Dendritic cell treated with granulocyte-macrophage colony-stimulating factor and Interleukin-4, amounts not matched to agents 40 ng/mL and 50 ng/mL, for 4 days (primary cell): ENCODE measurements at regions of chr2 and their contacts with region 1.

Region 1: DNA sequence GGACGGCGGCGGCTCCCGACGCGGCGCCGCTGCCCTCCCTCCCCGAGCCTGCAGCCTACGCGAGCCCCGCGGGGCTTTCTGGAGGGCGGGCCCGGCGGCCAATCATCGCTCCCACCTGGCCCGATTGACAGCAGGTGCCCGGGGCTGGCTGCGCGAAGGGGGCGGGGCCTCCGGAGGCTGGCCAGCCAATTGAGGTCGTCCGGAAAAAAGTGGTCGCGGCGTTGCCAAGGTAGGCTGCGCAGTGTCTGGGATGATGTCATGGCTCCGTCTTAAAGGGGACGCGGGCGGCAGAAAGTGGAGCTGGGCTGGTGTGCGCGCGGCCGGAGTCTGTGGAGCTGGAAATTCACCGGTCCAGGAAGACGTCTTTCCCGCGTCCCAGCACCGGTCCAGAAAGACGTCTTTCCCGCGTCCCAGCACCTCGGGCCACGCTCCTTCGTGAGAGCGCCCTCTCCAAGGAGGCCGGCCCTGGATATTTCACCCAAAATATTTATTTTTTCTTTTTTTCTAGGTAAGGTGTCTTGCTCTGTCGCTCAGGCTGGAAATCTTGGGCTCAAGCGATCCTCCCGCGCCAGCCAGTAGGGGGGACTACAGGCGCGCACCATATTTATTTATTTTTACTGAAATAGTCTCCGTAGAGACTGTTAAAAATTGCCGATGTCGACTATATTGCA is at the start of gene ACTR1B:
- H3K4me3 Mint-ChIP-seq: peak within 1 kb of the TSS; percentile 88
- H3K27ac Mint-ChIP-seq: peak within 1 kb of the TSS; percentile 95
- H3K4me1 Mint-ChIP-seq: peaks cover 39% of the 10 kb centered on the region
- H3K27me3 Mint-ChIP-seq: no peaks in the 10 kb centered on the region

Region 2: GRCh38 chr2:97645695-97646629 is 18.1 kb before region 1 on chr2 and contains the start of gene COX5B:
- intact Hi-C with region 1: loop called (anchors 1 kb)
- H3K4me3 Mint-ChIP-seq: peak within 1 kb of the TSS; percentile 92
- H3K27ac Mint-ChIP-seq: peak within 1 kb of the TSS; percentile 99
- H3K4me1 Mint-ChIP-seq: peaks cover 33% of the 10 kb centered on the region
- H3K27me3 Mint-ChIP-seq: peaks cover 2% of the 10 kb centered on the region

Region 3: DNA sequence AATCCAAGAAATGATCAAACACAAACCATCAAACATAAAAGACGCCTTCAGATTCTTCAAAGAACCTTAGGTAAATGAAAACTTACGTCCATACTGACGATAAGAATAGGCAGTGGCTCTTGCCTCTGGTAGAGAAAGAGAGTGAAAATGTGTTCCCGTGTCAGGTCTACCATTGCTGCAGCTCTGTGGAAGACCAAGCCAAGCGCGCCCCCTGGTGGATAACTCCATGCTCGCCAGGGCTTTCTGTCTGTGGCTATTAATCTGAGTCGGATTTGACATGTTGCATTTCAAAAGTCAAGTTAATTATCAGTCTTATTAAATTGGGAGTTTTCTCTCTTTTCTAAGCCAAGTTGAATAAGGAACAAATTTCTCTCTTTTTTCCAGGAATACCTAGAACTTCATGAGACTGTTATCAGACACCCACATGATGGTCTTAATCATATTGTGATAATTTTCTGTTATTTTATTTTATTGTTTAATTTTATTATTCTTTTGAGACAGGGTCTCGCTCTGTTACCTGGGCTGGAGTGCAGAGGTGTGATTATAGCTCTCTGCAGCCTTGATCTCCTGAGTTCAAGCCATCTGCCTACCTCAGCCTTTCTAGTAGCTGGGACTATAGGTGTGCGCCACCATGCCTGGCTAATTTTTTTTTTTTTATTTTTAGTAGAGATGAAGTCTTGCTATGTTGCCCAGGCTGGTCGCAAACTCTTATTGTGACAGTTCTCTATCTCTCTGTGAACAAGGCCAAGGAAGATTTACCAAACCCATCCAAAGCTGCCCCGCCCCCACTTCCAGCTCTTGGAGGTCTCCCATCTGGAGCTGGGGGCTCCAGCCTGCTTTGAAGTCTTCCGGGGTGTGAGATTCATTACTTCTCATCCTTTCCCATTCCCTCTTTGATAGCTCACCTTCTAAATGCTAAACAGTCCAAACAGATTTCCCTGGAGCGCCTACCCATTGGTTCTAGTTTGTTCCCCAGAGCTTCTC is 33.4 kb after region 1 on chr2:
- intact Hi-C with region 1: loop called (anchors 2 kb)
- H3K4me3 Mint-ChIP-seq: peak overlapping the region; percentile 36
- H3K27ac Mint-ChIP-seq: no peak overlapping the region
- H3K4me1 Mint-ChIP-seq: peaks cover 15% of the 10 kb centered on the region
- H3K27me3 Mint-ChIP-seq: no peaks in the 10 kb centered on the region

Region 4: DNA sequence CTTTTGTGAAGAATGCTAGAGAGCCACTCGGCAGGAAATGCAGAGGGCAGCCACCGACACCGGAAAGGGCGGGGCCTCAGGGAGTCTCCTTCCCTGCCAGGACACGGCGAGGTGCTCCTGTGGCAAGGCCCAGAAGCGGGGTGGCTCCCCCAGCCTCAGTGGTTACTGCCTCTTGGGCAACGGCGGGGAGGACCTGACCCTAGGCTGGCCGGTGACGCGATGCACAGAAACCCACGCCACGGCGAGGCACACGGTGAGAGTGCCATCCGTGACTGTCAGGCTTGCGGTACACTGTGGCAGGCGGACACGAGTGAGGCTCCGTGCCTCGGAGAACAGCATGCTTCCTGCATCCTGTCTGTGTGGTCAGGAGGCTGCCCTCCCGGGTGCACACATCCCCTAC is 97.1 kb after region 1 on chr2:
- intact Hi-C with region 1: no loop called
- H3K4me3 Mint-ChIP-seq: no peak overlapping the region
- H3K27ac Mint-ChIP-seq: no peak overlapping the region
- H3K4me1 Mint-ChIP-seq: no peaks in the 10 kb centered on the region
- H3K27me3 Mint-ChIP-seq: no peaks in the 10 kb centered on the region

Region 5: GRCh38 chr2:98608116-98608999 is 944.3 kb after region 1 on chr2 and contains the starts of genes COA5 and UNC50:
- intact Hi-C with region 1: loop called (anchors 5 kb)
- H3K4me3 Mint-ChIP-seq: peak within 1 kb of the TSS; percentile 93
- H3K27ac Mint-ChIP-seq: peak within 1 kb of the TSS; percentile 99
- H3K4me1 Mint-ChIP-seq: peaks cover 51% of the 10 kb centered on the region
- H3K27me3 Mint-ChIP-seq: no peaks in the 10 kb centered on the region